Activated B cell treated with CpG ODN at 0.5 μM for 24 hours (primary cell): ENCODE measurements at regions of chr10 and their contacts with region 1.

Region 1: DNA sequence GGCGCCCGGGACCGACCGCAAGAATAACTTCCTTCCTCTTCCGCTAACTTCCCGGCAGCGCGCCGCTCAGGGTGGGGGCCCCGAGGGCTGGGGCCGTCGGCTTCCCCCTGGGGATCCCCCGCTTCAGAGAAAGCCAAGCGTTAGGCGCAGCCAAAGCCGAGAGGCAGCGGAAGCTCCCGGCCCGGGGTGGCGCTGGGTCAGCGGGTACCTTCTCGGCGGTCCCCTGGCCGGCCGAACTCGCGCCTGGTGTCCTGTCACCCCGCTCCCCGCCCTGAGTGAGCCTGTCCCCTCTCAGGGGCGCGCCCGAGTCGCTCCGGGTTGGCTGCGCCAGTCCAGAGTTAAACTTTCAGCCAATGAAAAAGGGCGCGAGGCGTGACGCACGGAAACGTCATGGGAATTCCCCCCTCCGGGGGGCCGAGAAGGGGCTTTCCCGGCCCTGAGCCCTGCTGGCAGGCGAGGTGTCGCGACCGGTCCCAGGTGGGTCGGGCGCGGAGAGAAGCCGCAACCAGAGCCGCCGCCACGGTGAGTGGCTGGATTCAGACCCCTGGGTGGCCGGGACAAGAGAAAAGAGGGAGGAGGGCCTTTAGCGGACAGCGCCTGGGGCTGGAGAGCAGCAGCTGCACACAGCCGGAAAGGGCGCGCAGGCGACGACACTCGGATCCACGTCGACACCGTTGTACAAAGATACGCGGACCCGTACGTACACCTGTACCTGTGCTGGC is 1.3 kb upstream of the NFKB2 start:
- DNase-seq: peak; percentile 99
- ATAC-seq: peak; percentile 79
- H3K4me3 Mint-ChIP-seq: peak overlapping the region; percentile 94
- H3K27ac Mint-ChIP-seq: peak overlapping the region; percentile 97
- H3K4me1 Mint-ChIP-seq: peaks cover 46% of the 10 kb centered on the region
- H3K27me3 Mint-ChIP-seq: no peaks in the 10 kb centered on the region
- CTCF ChIP-seq: no peak

Region 2: GRCh38 chr10:102132563-102133372 is 261.5 kb before region 1 on chr10 and contains the start of gene PPRC1:
- CTCF ChIA-PET with region 1: no interaction called
- POLR2A ChIA-PET with region 1: interaction called, 3 read pairs
- intact Hi-C with region 1: loop called (anchors 1 kb)
- DNase-seq: peak; percentile 89
- ATAC-seq: peak; percentile 93
- H3K4me3 Mint-ChIP-seq: peak within 1 kb of the TSS; percentile 99
- H3K27ac Mint-ChIP-seq: peak within 1 kb of the TSS; percentile 98
- H3K4me1 Mint-ChIP-seq: peaks cover 41% of the 10 kb centered on the region
- H3K27me3 Mint-ChIP-seq: no peaks in the 10 kb centered on the region
- CTCF ChIP-seq: peak; percentile 81
- total RNA-seq, gene PPRC1: 65.1 and 77.2 TPM in 2 replicates

Region 3: DNA sequence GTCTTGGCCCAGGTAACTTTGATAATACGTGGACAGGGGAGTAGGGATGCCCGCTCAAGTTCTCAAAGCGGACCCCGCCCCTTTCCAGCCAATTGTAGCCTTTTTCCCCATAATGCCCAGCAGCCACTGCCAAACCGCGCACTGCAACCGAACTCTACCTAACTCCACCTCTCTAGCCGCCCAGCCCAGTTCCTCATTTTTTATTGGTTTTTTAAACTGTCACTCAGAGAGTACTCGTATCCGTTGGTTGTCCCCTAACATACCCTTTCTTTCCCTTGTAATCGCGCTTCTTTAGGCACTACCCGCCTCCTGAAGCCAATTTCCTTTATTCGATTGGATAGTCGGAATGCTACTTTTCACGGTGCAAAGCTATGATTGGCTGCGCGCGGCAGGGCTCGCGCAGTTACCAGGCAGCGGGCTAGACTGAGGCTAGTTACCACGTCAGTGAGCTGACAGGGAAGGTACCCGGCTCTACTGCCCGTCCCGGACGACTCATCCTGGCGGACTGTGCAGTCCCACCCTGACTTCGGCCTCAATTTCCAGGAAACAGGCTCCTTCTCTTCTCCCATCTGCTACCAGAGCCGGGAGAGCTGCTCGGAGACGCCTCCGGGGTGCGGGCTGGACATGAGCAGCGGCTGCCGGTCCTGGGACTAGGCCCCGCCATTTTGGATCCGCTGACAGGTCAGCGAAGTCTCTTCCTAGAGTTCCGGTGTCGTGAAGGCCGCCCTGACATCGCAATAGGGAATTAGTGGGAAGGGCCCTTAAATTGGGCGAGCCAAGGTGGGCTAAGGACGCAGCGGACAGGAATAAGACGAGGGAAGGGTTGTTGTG is 148.9 kb before region 1 on chr10 and contains the start of gene GBF1:
- CTCF ChIA-PET with region 1: no interaction called
- POLR2A ChIA-PET with region 1: interaction called, 15 read pairs
- intact Hi-C with region 1: loop called (anchors 1 kb)
- DNase-seq: peak; percentile 76
- ATAC-seq: peak; percentile 88
- H3K4me3 Mint-ChIP-seq: peak within 1 kb of the TSS; percentile 98
- H3K27ac Mint-ChIP-seq: peak within 1 kb of the TSS; percentile 91
- H3K4me1 Mint-ChIP-seq: peaks cover 58% of the 10 kb centered on the region
- H3K27me3 Mint-ChIP-seq: peaks cover 22% of the 10 kb centered on the region
- CTCF ChIP-seq: no peak
- total RNA-seq, gene GBF1: 40.8 and 44.3 TPM in 2 replicates

Region 4: GRCh38 chr10:102420810-102421644 is 26.8 kb after region 1 on chr10 and contains the start of gene FBXL15:
- CTCF ChIA-PET with region 1: interaction called, 29 read pairs
- POLR2A ChIA-PET with region 1: interaction called, 305 read pairs
- intact Hi-C with region 1: loop called (anchors 1 kb)
- DNase-seq: peak; percentile 93
- ATAC-seq: peak; percentile 78
- H3K4me3 Mint-ChIP-seq: peak within 1 kb of the TSS; percentile 98
- H3K27ac Mint-ChIP-seq: peak within 1 kb of the TSS; percentile 95
- H3K4me1 Mint-ChIP-seq: peaks cover 45% of the 10 kb centered on the region
- H3K27me3 Mint-ChIP-seq: peaks cover 17% of the 10 kb centered on the region
- CTCF ChIP-seq: no peak
- total RNA-seq, gene FBXL15: 15.7 and 18.9 TPM in 2 replicates

Region 5: GRCh38 chr10:102461187-102462054 is 67.2 kb after region 1 on chr10:
- CTCF ChIA-PET with region 1: interaction called, 4 read pairs
- POLR2A ChIA-PET with region 1: interaction called, 38 read pairs
- intact Hi-C with region 1: loop called (anchors 1 kb)
- DNase-seq: peak; percentile 90
- ATAC-seq: peak; percentile 99
- H3K4me3 Mint-ChIP-seq: peak overlapping the region; percentile 88
- H3K27ac Mint-ChIP-seq: peak overlapping the region; percentile 85
- H3K4me1 Mint-ChIP-seq: peaks cover 31% of the 10 kb centered on the region
- H3K27me3 Mint-ChIP-seq: no peaks in the 10 kb centered on the region
- CTCF ChIP-seq: no peak

Region 6: GRCh38 chr10:102583435-102584417 is 189.5 kb after region 1 on chr10:
- CTCF ChIA-PET with region 1: interaction called, 3 read pairs
- POLR2A ChIA-PET with region 1: interaction called, 9 read pairs
- intact Hi-C with region 1: loop called (anchors 2 kb)
- DNase-seq: peak; percentile 59
- ATAC-seq: peak; percentile 98
- H3K4me3 Mint-ChIP-seq: no peak overlapping the region
- H3K27ac Mint-ChIP-seq: no peak overlapping the region
- H3K4me1 Mint-ChIP-seq: no peaks in the 10 kb centered on the region
- H3K27me3 Mint-ChIP-seq: no peaks in the 10 kb centered on the region
- CTCF ChIP-seq: peak; percentile 64

Region 7: GRCh38 chr10:102917962-102918816 is 523.9 kb after region 1 on chr10 and contains the start of gene CNNM2:
- CTCF ChIA-PET with region 1: no interaction called
- POLR2A ChIA-PET with region 1: no interaction called
- intact Hi-C with region 1: loop called (anchors 5 kb)
- DNase-seq: peak; percentile 96
- ATAC-seq: peak; percentile 89
- H3K4me3 Mint-ChIP-seq: peak within 1 kb of the TSS; percentile 96
- H3K27ac Mint-ChIP-seq: peak within 1 kb of the TSS; percentile 93
- H3K4me1 Mint-ChIP-seq: peaks cover 45% of the 10 kb centered on the region
- H3K27me3 Mint-ChIP-seq: peaks cover 10% of the 10 kb centered on the region
- CTCF ChIP-seq: no peak
- total RNA-seq, gene CNNM2: 5.5 and 7.3 TPM in 2 replicates